ENCODE measurements at regions of chr2 and their contacts with region 1.

Region 1: DNA sequence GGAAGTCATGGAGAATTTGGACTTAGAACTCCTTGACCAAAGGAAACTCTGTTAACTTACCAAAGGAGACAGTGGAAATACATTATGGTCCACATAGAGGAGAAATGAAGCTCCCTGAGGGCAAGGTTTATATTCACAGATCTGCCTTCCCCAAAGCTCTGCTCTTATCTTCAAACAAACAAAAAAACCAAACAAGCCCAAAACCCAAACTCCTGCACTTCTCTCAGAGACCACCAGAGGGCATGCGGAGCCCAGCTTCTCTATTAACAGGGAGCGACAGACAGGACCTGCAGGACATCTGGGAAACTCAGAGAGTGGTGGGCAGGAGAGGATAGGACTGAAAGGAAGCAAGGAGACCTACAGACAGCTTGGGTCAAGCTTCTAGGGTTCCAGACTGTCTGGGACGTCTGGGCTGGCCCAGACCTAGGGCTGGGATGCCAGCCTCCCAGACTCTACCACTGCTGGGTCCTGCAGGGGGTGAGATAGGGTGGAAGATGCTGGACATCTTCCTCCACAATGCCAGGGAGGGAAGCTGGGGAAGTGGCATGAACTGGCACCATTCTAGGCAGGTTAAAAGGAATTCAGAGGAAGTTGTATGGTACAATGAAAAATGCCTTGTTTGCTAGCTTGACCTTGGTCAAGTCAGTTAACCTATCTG is 4.0 kb upstream of the WNT10A start:
- DNase-seq: peak; percentile 73
- H3K4me3 ChIP-seq: no peak overlapping the region
- H3K27ac ChIP-seq: peak overlapping the region; percentile 21
- H3K4me1 ChIP-seq: peaks cover 52% of the 10 kb centered on the region
- CTCF ChIP-seq: peak; percentile 99

Region 2: DNA sequence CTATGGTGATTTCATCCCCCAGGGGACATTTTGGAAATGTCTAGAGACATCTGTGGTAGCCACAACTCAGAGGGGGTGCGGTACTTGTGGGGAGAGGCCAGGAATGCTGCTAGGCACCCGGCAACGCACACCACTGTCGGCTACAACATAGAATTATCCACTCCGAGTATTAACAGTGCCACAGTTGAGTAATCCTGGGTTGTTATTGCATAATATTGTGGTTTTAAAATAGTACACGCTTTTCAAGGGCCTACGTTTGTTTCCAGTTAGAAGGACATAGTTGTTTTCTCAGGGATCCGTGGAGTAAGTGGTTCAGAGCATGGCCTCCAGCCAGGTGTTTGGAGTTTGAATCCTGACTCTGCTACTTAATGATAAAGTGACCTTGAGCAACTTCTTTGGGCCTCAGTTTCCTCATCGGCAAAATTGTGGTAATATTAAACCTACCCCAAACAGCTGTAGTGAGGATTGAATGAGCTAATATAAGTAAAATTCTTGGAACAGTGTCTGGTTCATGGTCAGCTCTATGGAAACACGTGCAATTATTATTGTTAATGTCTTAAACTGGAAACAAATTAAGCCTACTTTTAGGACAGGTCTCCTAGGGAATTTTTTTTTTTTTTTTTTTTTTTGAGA is 70.2 kb before region 1 on chr2:
- CTCF ChIA-PET with region 1: no interaction called
- POLR2A ChIA-PET with region 1: no interaction called
- intact Hi-C with region 1: no loop called
- DNase-seq: no peak
- H3K4me3 ChIP-seq: no peak overlapping the region
- H3K27ac ChIP-seq: no peak overlapping the region
- H3K4me1 ChIP-seq: peaks cover 3% of the 10 kb centered on the region
- CTCF ChIP-seq: no peak

Region 3: GRCh38 chr2:218852911-218853667 is 23.6 kb before region 1 on chr2:
- CTCF ChIA-PET with region 1: no interaction called
- POLR2A ChIA-PET with region 1: no interaction called
- intact Hi-C with region 1: loop called (anchors 2 kb)
- DNase-seq: peak; percentile 67
- H3K4me3 ChIP-seq: no peak overlapping the region
- H3K27ac ChIP-seq: no peak overlapping the region
- H3K4me1 ChIP-seq: no peaks in the 10 kb centered on the region
- CTCF ChIP-seq: peak; percentile 91

Region 4: GRCh38 chr2:218892693-218893348 is 16.1 kb after region 1 on chr2:
- CTCF ChIA-PET with region 1: interaction called, 107 read pairs
- POLR2A ChIA-PET with region 1: interaction called, 86 read pairs
- intact Hi-C with region 1: loop called (anchors 1 kb)
- DNase-seq: peak; percentile 95
- H3K4me3 ChIP-seq: peak overlapping the region; percentile 69
- H3K27ac ChIP-seq: peak overlapping the region; percentile 70
- H3K4me1 ChIP-seq: peaks cover 62% of the 10 kb centered on the region
- CTCF ChIP-seq: peak; percentile 77

Region 5: GRCh38 chr2:218898109-218898878 is 21.6 kb after region 1 on chr2:
- CTCF ChIA-PET with region 1: interaction called, 107 read pairs
- POLR2A ChIA-PET with region 1: interaction called, 86 read pairs
- intact Hi-C with region 1: loop called (anchors 1 kb)
- DNase-seq: peak; percentile 76
- H3K4me3 ChIP-seq: no peak overlapping the region
- H3K27ac ChIP-seq: no peak overlapping the region
- H3K4me1 ChIP-seq: peaks cover 55% of the 10 kb centered on the region
- CTCF ChIP-seq: peak; percentile 94

Region 6: DNA sequence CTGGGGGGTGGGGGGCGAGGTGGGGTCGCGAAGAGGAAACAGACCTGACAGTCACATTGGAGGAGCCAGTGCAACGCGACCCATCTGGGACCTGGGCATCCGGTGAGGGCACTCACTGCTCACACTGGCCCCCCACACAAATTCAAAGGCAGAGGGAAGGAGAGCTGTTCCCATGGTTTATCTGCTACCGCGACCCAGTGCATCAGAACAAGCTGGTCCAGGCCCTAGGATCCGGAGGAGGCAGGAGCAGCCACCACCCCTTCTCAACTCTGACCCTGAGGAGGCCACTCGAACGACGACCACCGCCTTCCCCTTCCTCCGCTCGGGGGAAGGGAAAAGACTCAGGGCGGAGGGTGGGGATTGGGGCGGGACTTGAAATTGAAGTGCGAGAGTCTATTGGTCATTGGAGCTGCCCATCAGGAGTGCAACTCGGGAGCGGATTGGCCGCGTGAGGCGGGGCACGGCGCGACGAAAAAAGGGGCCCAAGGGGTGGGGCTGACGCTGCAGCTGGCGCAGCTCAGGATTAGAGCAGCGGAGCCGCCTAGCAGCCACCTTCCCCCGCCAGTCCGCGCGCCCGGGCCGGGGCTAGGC is 82.5 kb after region 1 on chr2 and contains the start of gene CDK5R2:
- CTCF ChIA-PET with region 1: no interaction called
- POLR2A ChIA-PET with region 1: no interaction called
- intact Hi-C with region 1: loop called (anchors 1 kb)
- DNase-seq: peak; percentile 95
- H3K4me3 ChIP-seq: peak within 1 kb of the TSS; percentile 72
- H3K27ac ChIP-seq: no peak within 1 kb of the TSS
- H3K4me1 ChIP-seq: peaks cover 6% of the 10 kb centered on the region
- CTCF ChIP-seq: no peak
- total RNA-seq, gene CDK5R2: 0.09 and 0.41 TPM in 2 replicates

Region 7: GRCh38 chr2:218979846-218980734 is 103.4 kb after region 1 on chr2:
- CTCF ChIA-PET with region 1: interaction called, 5 read pairs
- POLR2A ChIA-PET with region 1: no interaction called
- intact Hi-C with region 1: loop called (anchors 2 kb)
- DNase-seq: peak; percentile 74
- H3K4me3 ChIP-seq: peak overlapping the region; percentile 38
- H3K27ac ChIP-seq: no peak overlapping the region
- H3K4me1 ChIP-seq: no peaks in the 10 kb centered on the region
- CTCF ChIP-seq: peak; percentile 99

Measured in OCI-LY7 (cell line).